Sigmoid colon (tissue), 7 donors: ENCODE measurements at regions of chr9 and their contacts with region 1.

Region 1: GRCh38 chr9:87479801-87480201 is 17.9 kb upstream of the DAPK1 start:
- DNase-seq: no peak
- H3K4me3 ChIP-seq: no peak overlapping the region
- H3K27ac ChIP-seq: no peak overlapping the region
- H3K4me1 ChIP-seq: no peaks in the 10 kb centered on the region
- H3K27me3 ChIP-seq: no peaks in the 10 kb centered on the region
- CTCF ChIP-seq: no peak
- EP300 ChIP-seq: no peak
- POLR2A ChIP-seq: no peak

Region 2: GRCh38 chr9:87359958-87360601 is 119.7 kb before region 1 on chr9:
- intact Hi-C with region 1: loop called (anchors 10 kb)
- DNase-seq: no peak
- H3K4me3 ChIP-seq: no peak overlapping the region
- H3K27ac ChIP-seq: no peak overlapping the region
- H3K4me1 ChIP-seq: no peaks in the 10 kb centered on the region
- H3K27me3 ChIP-seq: no peaks in the 10 kb centered on the region
- CTCF ChIP-seq: no peak
- EP300 ChIP-seq: no peak
- POLR2A ChIP-seq: no peak